CD4-positive, alpha-beta memory T cell (primary cell): ENCODE measurements at regions of chr20 and their contacts with region 1.

Region 1: GRCh38 chr20:63864847-63865640 is at the start of gene TPD52L2:
- DNase-seq: peak; percentile 96 to 99 (median 97)
- H3K4me3 ChIP-seq: peak within 1 kb of the TSS; percentile 81 to 90
- H3K4me3 Mint-ChIP-seq: peak within 1 kb of the TSS; percentile 90 to 99 (median 96)
- H3K27ac ChIP-seq: peak within 1 kb of the TSS; percentile 81
- H3K27ac Mint-ChIP-seq: peak within 1 kb of the TSS; percentile 87 to 99 (median 96)
- H3K4me1 ChIP-seq: peaks cover 29% of the 10 kb centered on the region
- H3K4me1 Mint-ChIP-seq: peaks cover 15 to 48% (median 29%) of the 10 kb centered on the region in 4 donors
- H3K27me3 ChIP-seq: no peaks in the 10 kb centered on the region
- H3K27me3 Mint-ChIP-seq: no peaks in the 10 kb centered on the region
- total RNA-seq, gene TPD52L2: 44.4 to 44.9 TPM

Region 2: GRCh38 chr20:63520504-63520933 is 344.5 kb before region 1 on chr20 and contains the start of gene PPDPF:
- CTCF ChIA-PET with region 1: no interaction called
- POLR2A ChIA-PET with region 1: interaction called, 12 read pairs
- intact Hi-C with region 1: loop called (anchors 1 kb)
- DNase-seq: peak; percentile 80 to 89 (median 83)
- H3K4me3 ChIP-seq: peak within 1 kb of the TSS; percentile 77 to 84
- H3K4me3 Mint-ChIP-seq: peak within 1 kb of the TSS; percentile 80 to 84 (median 82)
- H3K27ac ChIP-seq: peak within 1 kb of the TSS; percentile 74
- H3K27ac Mint-ChIP-seq: peak within 1 kb of the TSS; percentile 57 to 82 (median 74)
- H3K4me1 ChIP-seq: peaks cover 23% of the 10 kb centered on the region
- H3K4me1 Mint-ChIP-seq: peaks cover 6 to 28% (median 11%) of the 10 kb centered on the region in 4 donors
- H3K27me3 ChIP-seq: no peaks in the 10 kb centered on the region
- H3K27me3 Mint-ChIP-seq: no peaks in the 10 kb centered on the region
- total RNA-seq, gene PPDPF: 208 to 229 TPM

Region 3: DNA sequence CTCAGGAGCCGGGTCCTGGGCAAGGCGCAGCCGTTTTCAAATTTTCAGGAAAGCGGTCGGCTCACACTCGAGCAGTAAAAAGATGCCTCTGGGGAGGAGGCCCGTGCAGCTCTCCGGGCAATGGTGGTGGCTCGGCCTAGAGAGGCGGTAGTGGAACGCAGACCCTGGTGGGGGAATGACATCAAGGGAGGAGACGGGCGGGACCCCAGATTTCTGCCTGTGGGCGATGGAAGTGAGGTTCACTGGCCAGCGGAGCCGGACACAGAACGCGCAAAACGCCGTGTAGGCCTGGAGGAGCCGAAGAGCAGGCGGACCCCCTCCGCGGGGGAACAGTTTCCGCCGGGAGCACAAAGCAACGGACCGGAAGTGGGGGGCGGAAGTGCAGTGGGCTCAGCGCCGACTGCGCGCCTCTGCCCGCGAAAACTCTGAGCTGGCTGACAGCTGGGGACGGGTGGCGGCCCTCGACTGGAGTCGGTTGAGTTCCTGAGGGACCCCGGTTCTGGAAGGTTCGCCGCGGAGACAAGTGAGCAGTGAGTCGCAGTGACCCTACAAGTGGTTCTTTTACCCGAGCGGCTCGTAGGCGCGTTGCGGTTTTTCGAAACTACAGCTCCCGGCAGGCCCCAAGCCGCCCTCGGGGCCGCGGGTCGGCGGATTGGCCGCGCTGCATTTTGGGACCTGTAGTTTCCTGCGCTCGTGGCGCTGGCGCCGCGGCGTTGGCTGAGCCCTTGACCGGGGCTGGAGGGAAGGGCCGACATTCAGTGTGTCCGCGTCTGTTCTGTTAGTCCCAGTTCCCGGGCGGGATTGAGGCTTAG is 206.9 kb before region 1 on chr20 and contains the start of gene RTEL1:
- CTCF ChIA-PET with region 1: no interaction called
- POLR2A ChIA-PET with region 1: interaction called, 12 read pairs
- intact Hi-C with region 1: loop called (anchors 1 kb)
- DNase-seq: peak; percentile 86 to 93 (median 88)
- H3K4me3 ChIP-seq: peak within 1 kb of the TSS; percentile 91 to 97
- H3K4me3 Mint-ChIP-seq: peak within 1 kb of the TSS; percentile 92 to 98 (median 96)
- H3K27ac ChIP-seq: peak within 1 kb of the TSS; percentile 75
- H3K27ac Mint-ChIP-seq: peak within 1 kb of the TSS; percentile 94 to 98 (median 96)
- H3K4me1 ChIP-seq: peaks cover 42% of the 10 kb centered on the region
- H3K4me1 Mint-ChIP-seq: peaks cover 17 to 48% (median 24%) of the 10 kb centered on the region in 4 donors
- H3K27me3 ChIP-seq: no peaks in the 10 kb centered on the region
- H3K27me3 Mint-ChIP-seq: no peaks in the 10 kb centered on the region
- total RNA-seq, gene RTEL1: 30.9 to 36.0 TPM

Region 4: DNA sequence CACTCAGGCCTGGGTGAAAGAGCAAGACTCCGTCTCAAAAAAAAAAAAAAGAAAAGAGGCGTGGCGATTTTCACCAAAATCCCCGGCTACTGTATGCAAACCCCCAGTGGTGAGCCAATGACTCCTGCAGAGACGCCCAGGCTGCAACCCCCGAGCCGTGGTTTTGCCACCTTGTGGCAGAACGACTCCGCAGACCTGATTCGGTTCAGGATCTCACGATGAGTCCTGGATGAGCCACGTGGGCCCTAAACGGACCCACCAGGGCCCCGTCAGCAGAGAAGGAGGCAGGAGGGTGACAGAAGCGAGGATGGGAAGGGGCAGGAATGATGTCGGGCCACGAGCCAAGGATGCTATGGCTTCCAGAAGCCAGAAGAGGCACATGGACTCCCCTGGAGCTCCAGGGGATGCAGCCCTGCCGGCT is 83.0 kb before region 1 on chr20:
- CTCF ChIA-PET with region 1: interaction called, 39 read pairs
- POLR2A ChIA-PET with region 1: interaction called, 8 read pairs
- intact Hi-C with region 1: loop called (anchors 1 kb)
- DNase-seq: peak; percentile 65 to 83 (median 73)
- H3K4me3 ChIP-seq: no peak overlapping the region
- H3K4me3 Mint-ChIP-seq: peak overlapping the region in 6 of 8 donors; percentile 55 to 80 (median 70)
- H3K27ac ChIP-seq: no peak overlapping the region
- H3K27ac Mint-ChIP-seq: peak overlapping the region; percentile 17 to 90 (median 82)
- H3K4me1 ChIP-seq: peaks cover 14% of the 10 kb centered on the region
- H3K4me1 Mint-ChIP-seq: peaks cover 16 to 27% (median 17%) of the 10 kb centered on the region in 4 donors
- H3K27me3 ChIP-seq: no peaks in the 10 kb centered on the region
- H3K27me3 Mint-ChIP-seq: no peaks in the 10 kb centered on the region

Region 5: DNA sequence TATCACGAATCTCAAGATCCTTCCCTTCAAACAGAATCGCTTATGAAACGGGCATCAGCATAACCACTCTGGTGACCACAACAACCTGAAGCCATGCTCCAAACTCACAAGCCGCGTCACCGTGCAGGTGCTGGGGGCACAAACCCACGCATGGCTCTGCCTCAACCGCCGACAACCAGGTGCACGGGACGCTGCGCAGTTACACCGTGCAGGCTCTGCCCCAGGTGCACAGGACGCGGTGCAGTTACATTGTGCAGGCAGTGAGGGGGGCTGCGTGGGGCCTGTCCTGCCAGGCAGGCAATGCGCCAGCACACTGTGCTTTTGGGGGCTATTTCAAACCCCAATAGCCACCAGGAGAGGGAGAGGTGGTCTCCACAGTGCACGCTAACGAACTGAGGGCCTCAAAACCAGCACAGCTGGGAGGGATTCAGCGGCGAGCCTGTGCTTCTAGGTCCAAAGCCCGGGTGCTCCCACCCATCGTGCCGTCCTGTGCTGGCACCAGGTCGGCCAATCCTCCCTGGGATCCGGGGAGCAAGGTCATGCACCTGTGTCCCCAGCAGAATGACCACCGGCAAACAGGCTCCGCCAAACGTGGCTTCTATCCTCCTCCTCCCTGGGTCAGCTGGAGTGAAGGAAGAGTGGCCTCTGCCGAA is 69.7 kb before region 1 on chr20:
- CTCF ChIA-PET with region 1: no interaction called
- POLR2A ChIA-PET with region 1: no interaction called
- intact Hi-C with region 1: no loop called
- DNase-seq: no peak
- H3K4me3 ChIP-seq: no peak overlapping the region
- H3K4me3 Mint-ChIP-seq: no peak overlapping the region
- H3K27ac ChIP-seq: no peak overlapping the region
- H3K27ac Mint-ChIP-seq: peak overlapping the region in 1 of 7 donors; percentile 79
- H3K4me1 ChIP-seq: no peaks in the 10 kb centered on the region
- H3K4me1 Mint-ChIP-seq: peaks cover 0 to 1% (median 0%) of the 10 kb centered on the region in 4 donors
- H3K27me3 ChIP-seq: no peaks in the 10 kb centered on the region
- H3K27me3 Mint-ChIP-seq: peaks cover 7 to 9% of the 10 kb centered on the region in 2 donors

Region 6: GRCh38 chr20:63815615-63816253 is 49.3 kb before region 1 on chr20:
- CTCF ChIA-PET with region 1: no interaction called
- POLR2A ChIA-PET with region 1: no interaction called
- intact Hi-C with region 1: no loop called
- DNase-seq: no peak
- H3K4me3 ChIP-seq: no peak overlapping the region
- H3K4me3 Mint-ChIP-seq: no peak overlapping the region
- H3K27ac ChIP-seq: no peak overlapping the region
- H3K27ac Mint-ChIP-seq: no peak overlapping the region
- H3K4me1 ChIP-seq: no peaks in the 10 kb centered on the region
- H3K4me1 Mint-ChIP-seq: peaks cover 0 to 7% (median 4%) of the 10 kb centered on the region in 4 donors
- H3K27me3 ChIP-seq: no peaks in the 10 kb centered on the region
- H3K27me3 Mint-ChIP-seq: peaks cover 0 to 2% of the 10 kb centered on the region in 2 donors

Region 7: GRCh38 chr20:63835021-63835858 is 29.8 kb before region 1 on chr20:
- CTCF ChIA-PET with region 1: no interaction called
- POLR2A ChIA-PET with region 1: no interaction called
- intact Hi-C with region 1: no loop called
- DNase-seq: no peak
- H3K4me3 ChIP-seq: no peak overlapping the region
- H3K4me3 Mint-ChIP-seq: peak overlapping the region in 1 of 8 donors; percentile 35
- H3K27ac ChIP-seq: no peak overlapping the region
- H3K27ac Mint-ChIP-seq: no peak overlapping the region
- H3K4me1 ChIP-seq: no peaks in the 10 kb centered on the region
- H3K4me1 Mint-ChIP-seq: peaks cover 0 to 4% (median under 1%) of the 10 kb centered on the region in 4 donors
- H3K27me3 ChIP-seq: no peaks in the 10 kb centered on the region
- H3K27me3 Mint-ChIP-seq: peaks cover 2 to 5% of the 10 kb centered on the region in 2 donors

Region 8: DNA sequence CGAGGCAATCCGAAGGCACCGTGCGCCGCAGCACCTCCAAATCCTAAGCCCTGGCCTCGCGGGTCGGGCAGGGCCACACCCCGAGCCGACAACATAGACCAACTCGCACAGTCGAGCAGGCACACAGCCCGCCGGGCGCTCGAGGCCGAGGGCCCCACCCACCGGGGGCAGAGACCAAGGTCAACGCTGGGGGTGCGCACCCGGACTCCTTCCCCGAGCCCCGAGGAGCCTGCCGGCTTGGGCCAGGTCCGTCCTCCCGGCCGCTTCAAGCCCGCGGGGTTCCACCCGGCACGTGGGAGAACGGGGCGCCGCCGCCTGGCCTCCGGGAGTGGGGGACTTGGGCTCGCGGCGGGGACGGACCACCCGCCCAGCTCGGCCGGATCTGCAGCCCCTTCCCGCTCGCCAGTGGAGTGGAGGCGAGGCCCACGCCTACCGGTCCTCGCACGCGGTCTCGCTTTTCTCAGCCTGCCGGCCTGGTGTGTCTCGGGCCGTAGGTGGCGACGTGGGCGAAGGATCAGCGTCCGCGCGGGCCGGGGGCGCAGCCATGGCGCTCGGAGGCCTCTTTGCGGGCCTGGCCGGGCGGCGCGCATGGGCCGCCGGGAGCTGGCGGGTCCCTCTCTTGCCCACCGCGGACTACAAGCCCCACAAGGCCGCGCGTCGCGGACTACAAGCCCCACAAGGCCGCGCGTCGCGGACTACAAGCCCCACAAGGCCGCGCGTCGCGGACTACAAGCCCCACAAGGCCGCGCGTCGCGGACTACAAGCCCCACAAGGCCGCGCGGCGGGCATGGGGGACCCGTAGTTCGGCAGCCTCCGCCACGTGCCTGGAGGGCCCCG is 91.0 kb after region 1 on chr20 and contains the start of gene UCKL1:
- CTCF ChIA-PET with region 1: interaction called, 3 read pairs
- POLR2A ChIA-PET with region 1: interaction called, 15 read pairs
- intact Hi-C with region 1: loop called (anchors 1 kb)
- DNase-seq: peak; percentile 90 to 94 (median 93)
- H3K4me3 ChIP-seq: peak within 1 kb of the TSS; percentile 34 to 79
- H3K4me3 Mint-ChIP-seq: peak within 1 kb of the TSS; percentile 77 to 88 (median 86)
- H3K27ac ChIP-seq: peak within 1 kb of the TSS; percentile 87
- H3K27ac Mint-ChIP-seq: peak within 1 kb of the TSS; percentile 84 to 93 (median 87)
- H3K4me1 ChIP-seq: peaks cover 43% of the 10 kb centered on the region
- H3K4me1 Mint-ChIP-seq: peaks cover 10 to 47% (median 29%) of the 10 kb centered on the region in 4 donors
- H3K27me3 ChIP-seq: no peaks in the 10 kb centered on the region
- H3K27me3 Mint-ChIP-seq: no peaks in the 10 kb centered on the region
- total RNA-seq, gene UCKL1: 53.7 to 55.1 TPM

Region 9: DNA sequence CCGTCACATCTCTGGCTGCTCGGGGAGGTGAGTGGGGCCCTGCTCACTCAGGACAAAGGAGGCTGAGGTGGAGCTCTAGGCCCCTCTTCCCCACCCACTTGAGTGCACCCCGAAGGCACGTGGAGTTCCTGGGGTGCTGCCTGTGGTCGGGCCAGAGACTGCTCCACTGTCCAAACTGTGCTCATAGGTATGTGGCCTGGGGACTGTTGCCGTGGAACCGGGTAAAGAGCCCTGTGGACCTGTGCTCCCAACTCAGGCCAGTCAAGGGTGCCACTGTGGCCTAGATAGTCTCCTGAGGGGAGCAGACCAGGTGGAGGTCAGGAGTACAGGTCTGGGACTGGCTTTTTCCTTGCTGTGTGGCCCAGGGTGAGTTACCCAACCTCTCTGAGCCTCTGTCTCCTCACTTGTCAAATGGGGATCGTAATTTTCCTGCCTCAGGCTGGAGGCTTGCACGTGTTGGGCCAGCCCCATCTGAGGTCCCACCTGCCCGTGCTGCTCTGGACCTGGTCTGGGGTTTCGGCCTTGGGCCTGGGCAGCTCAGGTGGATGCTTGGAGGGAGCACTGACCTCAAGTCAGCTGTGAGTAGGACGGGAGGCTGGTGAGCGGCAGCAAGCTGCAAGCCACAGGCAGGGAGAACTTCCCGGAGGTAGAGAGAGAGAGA is 254.8 kb after region 1 on chr20:
- CTCF ChIA-PET with region 1: no interaction called
- POLR2A ChIA-PET with region 1: no interaction called
- intact Hi-C with region 1: loop called (anchors 1 kb)
- DNase-seq: no peak
- H3K4me3 ChIP-seq: peak overlapping the region; percentile 12 to 47
- H3K4me3 Mint-ChIP-seq: peak overlapping the region; percentile 32 to 82 (median 77)
- H3K27ac ChIP-seq: no peak overlapping the region
- H3K27ac Mint-ChIP-seq: peak overlapping the region in 5 of 7 donors; percentile 48 to 91 (median 79)
- H3K4me1 ChIP-seq: peaks cover 11% of the 10 kb centered on the region
- H3K4me1 Mint-ChIP-seq: peaks cover 3 to 10% (median 7%) of the 10 kb centered on the region in 4 donors
- H3K27me3 ChIP-seq: peaks cover 10% of the 10 kb centered on the region
- H3K27me3 Mint-ChIP-seq: peaks cover 5 to 10% of the 10 kb centered on the region in 2 donors